ENCODE measurements at regions of chr14 and their contacts with region 1.

Region 1: GRCh38 chr14:34461334-34462131 is 507 bp downstream of the SPTSSA start:
- DNase-seq: peak; percentile 82
- H3K4me3 ChIP-seq: peak overlapping the region; percentile 39 to 86 (median 81)
- H3K27ac ChIP-seq: peak overlapping the region; percentile 89 to 99 (median 96)
- H3K4me1 ChIP-seq: peaks cover 0 to 25% (median 19%) of the 10 kb centered on the region in 4 donors
- H3K27me3 ChIP-seq: no peaks in the 10 kb centered on the region
- CTCF ChIP-seq: no peak
- EP300 ChIP-seq: no peak
- POLR2A ChIP-seq: no peak

Region 2: DNA sequence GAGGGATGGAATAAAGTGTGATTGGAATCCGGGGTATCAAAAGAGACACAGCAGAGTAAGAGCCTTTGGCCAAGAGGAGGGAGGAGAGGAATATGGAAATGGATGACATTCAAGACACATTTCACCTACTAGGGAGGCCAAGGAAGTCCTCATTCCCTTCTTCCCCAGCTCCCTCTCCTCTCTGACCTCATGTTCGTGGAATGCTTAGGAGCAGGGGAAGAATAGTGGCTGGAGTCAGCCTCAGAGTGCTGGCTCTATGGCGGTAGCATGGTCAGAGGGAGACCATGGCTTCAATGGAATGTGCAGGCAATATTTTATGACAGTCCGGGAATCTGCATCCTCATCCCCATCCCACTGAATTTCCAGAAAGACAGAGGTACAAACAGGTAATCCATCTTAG is 707.3 kb before region 1 on chr14:
- intact Hi-C with region 1: no loop called
- DNase-seq: no peak
- H3K4me3 ChIP-seq: no peak overlapping the region
- H3K27ac ChIP-seq: no peak overlapping the region
- H3K4me1 ChIP-seq: no peaks in the 10 kb centered on the region
- H3K27me3 ChIP-seq: no peaks in the 10 kb centered on the region
- CTCF ChIP-seq: no peak
- EP300 ChIP-seq: no peak
- POLR2A ChIP-seq: no peak

Region 3: GRCh38 chr14:34365309-34365915 is 96.1 kb before region 1 on chr14:
- intact Hi-C with region 1: loop called (anchors 5 kb)
- DNase-seq: no peak
- H3K4me3 ChIP-seq: no peak overlapping the region
- H3K27ac ChIP-seq: no peak overlapping the region
- H3K4me1 ChIP-seq: peaks cover 0 to 8% (median 4%) of the 10 kb centered on the region in 4 donors
- H3K27me3 ChIP-seq: no peaks in the 10 kb centered on the region
- CTCF ChIP-seq: no peak
- EP300 ChIP-seq: no peak
- POLR2A ChIP-seq: no peak

Region 4: GRCh38 chr14:34496679-34497513 is 35.4 kb after region 1 on chr14:
- intact Hi-C with region 1: loop called (anchors 1 kb)
- DNase-seq: peak; percentile 97
- H3K4me3 ChIP-seq: peak overlapping the region in 1 of 4 donors; percentile 16
- H3K27ac ChIP-seq: peak overlapping the region; percentile 85 to 88 (median 86)
- H3K4me1 ChIP-seq: peaks cover 0 to 27% (median 25%) of the 10 kb centered on the region in 4 donors
- H3K27me3 ChIP-seq: no peaks in the 10 kb centered on the region
- CTCF ChIP-seq: no peak
- EP300 ChIP-seq: peak; percentile 64 to 95 (median 87)
- POLR2A ChIP-seq: peak; percentile 22 to 53

Region 5: DNA sequence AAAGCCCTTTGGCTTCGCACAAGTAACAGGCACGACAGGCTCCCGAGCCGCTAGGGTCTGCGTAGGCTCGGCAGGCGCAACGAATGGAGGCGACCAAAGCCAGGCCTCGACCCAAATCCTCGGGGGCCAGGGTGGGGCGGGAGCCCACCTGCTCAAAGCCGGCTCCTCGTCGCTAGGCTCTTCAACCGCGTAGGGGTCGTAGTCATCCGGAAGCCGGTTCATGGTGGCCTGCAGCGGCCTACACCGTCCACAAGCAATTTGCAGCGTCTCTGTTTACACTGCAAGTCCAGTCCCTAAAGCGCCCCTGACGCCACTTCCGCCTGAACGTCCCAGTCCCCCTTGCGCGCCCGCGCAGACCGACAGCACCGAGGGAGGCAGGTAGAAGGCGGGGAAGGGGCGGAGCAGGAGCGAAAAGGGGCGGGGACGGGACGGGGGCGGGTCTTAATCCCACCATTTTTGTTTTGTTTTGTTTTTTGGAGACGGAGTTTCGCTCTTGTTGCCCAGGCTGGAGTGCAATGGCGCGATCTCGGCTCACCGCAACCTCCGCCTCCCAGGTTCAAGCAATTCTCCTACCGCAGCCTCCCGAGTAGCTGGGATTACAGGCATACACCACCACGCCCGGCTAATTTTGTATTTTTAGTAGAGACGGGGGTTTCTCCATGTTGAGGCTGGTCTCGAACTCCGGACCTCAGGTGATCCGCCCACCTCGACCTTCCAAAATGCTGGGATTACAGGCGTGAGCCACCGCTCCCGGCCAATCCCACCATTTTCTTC is 78.1 kb after region 1 on chr14 and contains the start of gene EAPP:
- intact Hi-C with region 1: loop called (anchors 5 kb)
- DNase-seq: peak; percentile 99
- H3K4me3 ChIP-seq: peak within 1 kb of the TSS; percentile 70 to 93 (median 86)
- H3K27ac ChIP-seq: peak within 1 kb of the TSS; percentile 89 to 98 (median 96)
- H3K4me1 ChIP-seq: peaks cover 0 to 28% (median 21%) of the 10 kb centered on the region in 4 donors
- H3K27me3 ChIP-seq: no peaks in the 10 kb centered on the region
- CTCF ChIP-seq: peak in 1 of 4 experiments; percentile 12
- EP300 ChIP-seq: peak in 2 of 4 donors; percentile 23 to 70
- POLR2A ChIP-seq: peak; percentile 90 to 92
- total RNA-seq, gene EAPP: 25.5 to 44.9 (median 39.2) TPM

Measured in sigmoid colon (tissue), 7 donors.